Left colon (tissue), 2 donors: ENCODE measurements at regions of chr5 and their contacts with region 1.

Region 1: GRCh38 chr5:153030755-153031725 is 459.4 kb upstream of the GRIA1 start:
- DNase-seq: no peak
- ATAC-seq: no peak

Region 2: DNA sequence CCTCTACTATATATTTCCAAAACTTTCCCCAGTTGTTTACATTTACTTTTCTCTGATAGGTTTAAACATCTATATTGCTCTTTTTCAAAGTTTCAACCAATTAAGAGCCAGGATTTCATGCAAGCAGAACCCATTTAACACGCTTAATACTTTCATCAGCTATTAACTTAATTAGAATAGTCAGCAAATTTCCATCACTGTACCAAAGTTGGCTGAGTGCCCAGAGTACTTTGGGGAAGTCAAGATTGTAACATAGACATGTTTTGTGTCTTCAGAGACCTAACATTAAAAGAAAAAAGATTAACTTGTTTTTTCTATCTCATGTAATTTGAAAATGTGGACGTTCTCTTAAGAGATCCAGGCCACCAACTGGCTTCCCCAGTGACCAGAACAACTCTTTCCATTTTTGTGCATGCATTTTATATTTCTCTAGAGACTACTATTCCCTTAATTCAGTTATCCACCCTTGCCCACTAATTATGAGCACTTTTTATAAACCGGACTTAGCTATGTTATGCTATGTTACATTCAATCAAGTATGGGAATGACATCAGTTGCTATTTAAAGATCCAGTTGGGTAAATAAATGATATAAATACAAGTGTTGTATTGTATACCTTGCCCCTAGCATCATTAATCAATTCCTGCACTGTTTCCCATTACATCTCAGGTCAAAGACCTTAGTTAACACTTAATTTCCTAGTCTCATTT is 147.8 kb before region 1 on chr5:
- intact Hi-C with region 1: no loop called
- DNase-seq: no peak
- ATAC-seq: no peak

Region 3: GRCh38 chr5:153168241-153168640 is 137.2 kb after region 1 on chr5:
- intact Hi-C with region 1: loop called in 1 of 2 experiments (anchors 10 kb)
- DNase-seq: no peak
- ATAC-seq: no peak